Calu3 (cell line): ENCODE measurements at regions of chr16 and their contacts with region 1.

Region 1: GRCh38 chr16:22397464-22397863 is 23.0 kb upstream of the CDR2 start:
- DNase-seq: peak; percentile 69
- H3K4me3 Mint-ChIP-seq: peak overlapping the region; percentile 3
- H3K27ac Mint-ChIP-seq: peak overlapping the region; percentile 57
- H3K4me1 Mint-ChIP-seq: peaks cover 42% of the 10 kb centered on the region
- H3K27me3 Mint-ChIP-seq: no peaks in the 10 kb centered on the region
- CTCF ChIP-seq: no peak

Region 2: DNA sequence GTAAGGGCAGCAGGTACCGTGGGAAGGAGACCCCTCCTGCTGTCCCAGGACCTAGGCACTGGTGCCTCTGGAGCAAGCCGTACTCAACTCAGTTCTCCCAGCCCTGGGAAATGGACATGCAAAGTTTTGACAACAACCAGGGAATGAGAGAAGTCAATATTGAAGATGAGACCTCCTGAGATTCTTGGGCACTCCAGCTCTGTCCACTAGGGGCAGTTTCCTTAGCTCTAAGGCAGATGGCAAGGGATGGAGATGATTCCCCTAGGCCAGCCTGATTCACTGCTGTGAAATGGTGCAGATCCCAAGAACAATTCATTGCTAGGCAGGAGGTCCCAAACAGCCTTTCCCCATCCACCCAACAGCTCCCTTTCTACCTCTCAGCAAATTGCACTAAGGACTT is 255.7 kb before region 1 on chr16:
- CTCF ChIA-PET with region 1: no interaction called
- intact Hi-C with region 1: no loop called
- DNase-seq: peak; percentile 9
- H3K4me3 Mint-ChIP-seq: no peak overlapping the region
- H3K27ac Mint-ChIP-seq: no peak overlapping the region
- H3K4me1 Mint-ChIP-seq: no peaks in the 10 kb centered on the region
- H3K27me3 Mint-ChIP-seq: peaks cover 95% of the 10 kb centered on the region
- CTCF ChIP-seq: peak; percentile 65

Region 3: DNA sequence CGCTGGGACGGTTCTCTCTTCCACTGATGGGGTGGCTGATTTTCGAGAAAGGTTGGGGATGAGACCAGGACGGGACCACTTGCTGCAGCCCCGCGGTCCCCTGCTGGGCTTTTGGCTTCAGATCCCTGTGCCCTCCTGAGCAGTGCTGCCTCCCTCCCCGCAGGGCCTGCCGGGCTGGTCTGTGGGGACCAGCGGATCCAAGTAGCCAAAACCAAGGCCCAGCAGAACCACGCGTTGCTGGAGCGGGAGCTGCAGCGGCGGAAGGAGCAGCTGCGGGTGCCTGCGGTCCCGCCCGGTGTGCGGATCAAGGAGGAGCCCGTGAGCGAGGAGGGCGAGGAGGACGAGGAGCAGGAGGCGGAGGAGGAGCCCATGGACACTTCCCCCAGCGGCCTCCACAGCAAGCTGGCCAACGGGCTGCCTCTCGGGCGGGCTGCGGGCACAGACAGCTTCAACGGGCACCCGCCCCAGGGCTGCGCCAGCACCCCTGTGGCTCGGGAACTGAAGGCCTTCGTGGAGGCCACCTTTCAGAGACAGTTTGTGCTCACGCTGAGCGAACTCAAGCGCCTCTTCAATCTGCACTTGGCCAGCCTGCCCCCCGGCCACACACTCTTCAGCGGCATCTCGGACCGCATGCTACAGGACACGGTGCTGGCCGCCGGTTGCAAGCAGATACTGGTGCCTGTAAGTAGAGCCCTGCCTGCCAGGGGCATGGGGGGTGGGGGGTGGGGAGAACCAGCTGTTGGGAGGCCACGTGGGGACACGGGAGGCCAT is 71.7 kb before region 1 on chr16:
- CTCF ChIA-PET with region 1: no interaction called
- intact Hi-C with region 1: no loop called
- DNase-seq: no peak
- H3K4me3 Mint-ChIP-seq: no peak overlapping the region
- H3K27ac Mint-ChIP-seq: no peak overlapping the region
- H3K4me1 Mint-ChIP-seq: no peaks in the 10 kb centered on the region
- H3K27me3 Mint-ChIP-seq: no peaks in the 10 kb centered on the region
- CTCF ChIP-seq: no peak

Region 4: GRCh38 chr16:22369221-22369811 is 28.1 kb before region 1 on chr16:
- CTCF ChIA-PET with region 1: interaction called, 8 read pairs
- intact Hi-C with region 1: loop called (anchors 1 kb)
- DNase-seq: no peak
- H3K4me3 Mint-ChIP-seq: peak overlapping the region; percentile 54
- H3K27ac Mint-ChIP-seq: peak overlapping the region; percentile 72
- H3K4me1 Mint-ChIP-seq: peaks cover 57% of the 10 kb centered on the region
- H3K27me3 Mint-ChIP-seq: no peaks in the 10 kb centered on the region
- CTCF ChIP-seq: no peak

Region 5: DNA sequence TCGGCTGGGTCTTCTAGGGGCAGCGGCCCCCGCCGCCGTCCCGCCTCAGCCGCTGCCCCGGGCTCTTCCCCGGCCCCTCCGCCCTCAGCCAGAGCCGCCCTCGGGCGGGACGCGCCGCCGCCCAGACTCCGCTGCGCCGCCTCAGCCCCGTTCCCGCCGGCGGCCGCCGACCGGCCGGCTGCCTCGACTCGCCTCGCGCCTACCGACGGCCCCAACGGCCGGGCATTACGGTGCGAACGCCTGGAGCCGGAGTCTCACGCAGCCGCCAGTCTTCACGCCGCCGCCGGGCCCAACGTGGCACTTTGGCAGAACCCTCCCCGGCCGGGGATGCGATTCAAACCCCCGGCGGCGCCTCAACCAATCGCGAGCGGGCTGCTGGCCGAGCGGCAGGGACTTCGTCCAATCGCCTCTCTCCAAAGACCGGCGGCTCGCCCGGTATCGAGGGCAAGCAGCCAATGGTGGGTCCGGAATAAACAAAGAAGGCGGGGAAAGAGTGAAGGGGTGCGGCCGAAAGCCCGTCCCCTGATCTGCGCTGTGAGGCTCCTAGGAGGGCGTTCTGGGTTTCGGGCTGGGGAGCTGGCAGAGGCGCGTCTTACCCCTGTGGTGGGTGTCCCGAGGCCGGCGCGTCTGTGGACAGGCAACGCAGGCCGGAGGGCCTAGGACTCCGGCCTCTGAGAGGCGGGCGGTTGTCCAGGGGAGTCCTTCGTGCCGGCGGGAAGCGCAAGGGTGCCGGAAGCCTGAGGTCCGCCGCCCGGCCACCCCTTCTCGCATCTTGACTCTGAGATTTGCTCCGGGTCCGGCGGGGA is 22.9 kb before region 1 on chr16 and contains the start of gene CDR2:
- CTCF ChIA-PET with region 1: interaction called, 8 read pairs
- intact Hi-C with region 1: loop called (anchors 1 kb)
- DNase-seq: peak; percentile 99
- H3K4me3 Mint-ChIP-seq: peak within 1 kb of the TSS; percentile 93
- H3K27ac Mint-ChIP-seq: peak within 1 kb of the TSS; percentile 95
- H3K4me1 Mint-ChIP-seq: peaks cover 27% of the 10 kb centered on the region
- H3K27me3 Mint-ChIP-seq: no peaks in the 10 kb centered on the region
- CTCF ChIP-seq: no peak
- total RNA-seq, gene CDR2: 76.2 and 78.9 TPM in 2 replicates